Activated T-helper 2 cell treated with anti-CD3 and anti-CD28 coated beads, Interferon-gamma antibody, Interleukin-2, Interleukin-4, amounts not matched to agents 10 μg/mL and 5 μg/mL and 100 μg/mL, durations not matched to agents 14 hours and 24 hours and 36 hours (primary cell): ENCODE measurements at regions of chr20 and their contacts with region 1.

Region 1: DNA sequence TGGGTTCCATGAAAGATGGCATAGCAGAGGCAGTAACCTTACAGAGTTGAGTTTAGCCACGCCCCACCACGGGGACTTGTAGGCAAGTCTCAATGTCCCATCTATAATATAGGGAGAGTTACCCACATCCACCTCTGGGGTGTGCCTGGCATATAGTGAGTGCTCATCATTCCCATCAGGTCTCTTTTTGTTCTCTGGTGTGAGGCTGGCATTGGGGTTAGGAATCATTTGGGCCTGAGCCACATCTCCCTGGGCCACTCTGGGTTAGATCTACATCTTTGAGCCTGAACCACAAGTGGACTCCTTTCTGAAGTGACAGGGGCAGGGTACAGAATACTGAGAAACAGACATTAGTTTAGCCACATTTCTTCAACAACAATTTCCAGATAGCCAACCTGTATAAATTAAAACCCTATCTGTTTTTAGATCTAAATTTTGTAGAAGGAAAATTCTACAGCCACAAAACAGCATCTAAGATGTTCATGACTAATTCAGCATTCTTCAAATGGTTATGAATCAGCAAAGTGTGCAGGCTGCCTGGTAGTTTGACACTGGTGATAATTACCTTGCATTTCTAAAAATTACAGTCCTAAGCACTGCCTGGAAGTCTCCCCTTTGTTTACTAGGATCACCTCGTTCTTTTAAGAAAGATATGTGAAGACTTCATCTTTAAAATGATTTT is 20.1 kb downstream of the RNF24 start:
- DNase-seq: no peak
- H3K4me3 Mint-ChIP-seq: no peak overlapping the region
- H3K27ac Mint-ChIP-seq: peak overlapping the region; percentile 83
- H3K4me1 Mint-ChIP-seq: peaks cover 58% of the 10 kb centered on the region
- H3K27me3 Mint-ChIP-seq: no peaks in the 10 kb centered on the region

Region 2: GRCh38 chr20:3911956-3912355 is 83.3 kb before region 1 on chr20:
- intact Hi-C with region 1: loop called (anchors 2 kb)
- DNase-seq: no peak
- H3K4me3 Mint-ChIP-seq: no peak overlapping the region
- H3K27ac Mint-ChIP-seq: no peak overlapping the region
- H3K4me1 Mint-ChIP-seq: peaks cover 43% of the 10 kb centered on the region
- H3K27me3 Mint-ChIP-seq: no peaks in the 10 kb centered on the region

Region 3: DNA sequence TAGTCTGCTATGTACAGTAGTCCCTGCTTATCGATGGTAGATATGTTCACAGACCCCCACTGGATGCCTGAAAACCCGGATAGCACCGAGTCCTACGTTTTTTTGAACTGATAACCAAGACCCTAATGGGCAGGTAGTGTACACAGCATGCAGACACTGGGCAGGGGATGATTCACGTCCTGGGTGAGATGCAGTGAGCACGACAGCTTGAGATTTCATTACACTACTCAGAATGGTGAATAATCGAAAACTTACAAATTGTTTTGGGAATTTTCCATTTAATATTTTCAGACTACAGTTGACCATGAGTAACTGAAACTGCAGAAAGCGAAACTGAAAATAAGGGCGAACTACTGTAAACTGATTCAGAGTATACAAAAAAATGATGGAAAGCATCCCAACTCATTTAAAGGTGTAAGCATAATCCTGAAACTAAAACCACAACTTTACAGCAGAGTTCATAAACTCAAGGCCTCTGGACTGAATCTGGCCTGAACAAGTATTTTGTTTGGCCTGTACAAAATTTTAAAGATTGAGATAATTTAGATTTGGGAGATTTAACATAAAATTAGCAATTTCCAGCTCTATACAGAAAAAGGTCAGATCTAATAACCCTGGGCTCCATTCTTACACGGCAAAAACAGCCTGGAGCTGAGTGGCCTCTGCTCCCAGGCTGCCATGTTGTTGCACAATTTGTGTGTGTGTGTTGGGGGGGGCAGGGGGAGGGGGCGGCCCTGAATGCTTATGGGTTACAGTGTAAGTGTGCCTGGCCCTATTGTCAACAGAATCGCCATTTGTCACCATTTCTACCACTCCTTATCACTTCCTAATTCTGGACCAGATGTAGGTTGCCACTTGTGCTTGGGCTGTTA is 14.7 kb before region 1 on chr20:
- intact Hi-C with region 1: loop called (anchors 1 kb)
- DNase-seq: peak; percentile 18
- H3K4me3 Mint-ChIP-seq: peak overlapping the region; percentile 72
- H3K27ac Mint-ChIP-seq: peak overlapping the region; percentile 94
- H3K4me1 Mint-ChIP-seq: peaks cover 26% of the 10 kb centered on the region
- H3K27me3 Mint-ChIP-seq: no peaks in the 10 kb centered on the region

Region 4: DNA sequence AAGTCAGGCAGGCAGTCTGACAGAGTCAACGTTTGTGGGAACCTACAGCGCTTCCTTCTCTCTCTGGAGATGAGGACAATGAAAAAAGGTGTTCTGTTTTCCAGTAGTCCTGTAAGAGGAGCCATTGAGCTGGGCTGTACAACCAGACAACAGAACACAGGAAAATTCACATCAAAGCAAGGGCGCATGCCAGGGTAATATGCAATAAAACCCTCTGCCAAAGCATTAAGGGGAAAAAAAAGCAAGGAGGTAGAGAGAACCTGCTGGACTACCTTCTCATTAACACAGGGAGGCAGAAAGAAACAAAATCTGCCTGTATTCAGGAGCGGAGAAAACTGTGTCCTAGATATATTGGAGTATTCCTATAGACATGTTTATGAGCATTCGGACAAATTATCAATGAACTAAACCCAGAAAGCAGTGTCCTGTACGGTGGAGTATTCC is 18.8 kb after region 1 on chr20:
- intact Hi-C with region 1: loop called (anchors 2 kb)
- DNase-seq: no peak
- H3K4me3 Mint-ChIP-seq: peak overlapping the region; percentile 82
- H3K27ac Mint-ChIP-seq: peak overlapping the region; percentile 66
- H3K4me1 Mint-ChIP-seq: peaks cover 49% of the 10 kb centered on the region
- H3K27me3 Mint-ChIP-seq: no peaks in the 10 kb centered on the region

Region 5: GRCh38 chr20:4171538-4172116 is 176.4 kb after region 1 on chr20:
- intact Hi-C with region 1: no loop called
- DNase-seq: no peak
- H3K4me3 Mint-ChIP-seq: peak overlapping the region; percentile 73
- H3K27ac Mint-ChIP-seq: peak overlapping the region; percentile 84
- H3K4me1 Mint-ChIP-seq: peaks cover 34% of the 10 kb centered on the region
- H3K27me3 Mint-ChIP-seq: no peaks in the 10 kb centered on the region

Region 6: DNA sequence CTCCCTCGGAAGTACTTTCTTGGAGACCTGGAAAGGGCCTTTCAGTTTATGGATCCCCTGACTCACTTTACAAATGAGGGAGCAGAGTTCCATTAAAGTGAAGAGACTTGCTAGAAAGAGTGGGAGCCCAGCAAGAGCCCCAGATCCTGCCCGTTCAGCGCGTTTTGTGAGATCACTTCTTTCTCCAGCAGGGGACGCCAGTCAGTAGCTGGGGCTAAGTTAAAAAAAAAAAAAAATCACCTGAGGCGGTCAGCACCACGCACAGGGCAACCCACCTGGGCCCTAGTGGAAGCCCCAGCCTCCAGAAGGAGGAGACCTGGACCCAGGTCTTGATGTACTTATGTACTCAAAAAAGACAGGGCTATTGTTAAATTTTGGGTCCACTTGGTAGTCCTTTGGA is 294.7 kb after region 1 on chr20:
- intact Hi-C with region 1: no loop called
- DNase-seq: no peak
- H3K4me3 Mint-ChIP-seq: no peak overlapping the region
- H3K27ac Mint-ChIP-seq: no peak overlapping the region
- H3K4me1 Mint-ChIP-seq: no peaks in the 10 kb centered on the region
- H3K27me3 Mint-ChIP-seq: no peaks in the 10 kb centered on the region